ENCODE measurements at regions of chr12 and their contacts with region 1.

Region 1: GRCh38 chr12:52980693-52981423 is 25.4 kb upstream of the EIF4B start:
- DNase-seq: peak; percentile 78 to 83 (median 82)
- H3K4me3 ChIP-seq: no peak overlapping the region
- H3K4me3 Mint-ChIP-seq: no peak overlapping the region
- H3K27ac ChIP-seq: no peak overlapping the region
- H3K27ac Mint-ChIP-seq: peak overlapping the region in 1 of 7 donors; percentile 65
- H3K4me1 ChIP-seq: no peaks in the 10 kb centered on the region
- H3K4me1 Mint-ChIP-seq: peaks cover 0 to 5% (median 1%) of the 10 kb centered on the region in 4 donors
- H3K27me3 ChIP-seq: peaks cover 9% of the 10 kb centered on the region
- H3K27me3 Mint-ChIP-seq: peaks cover 27 to 30% of the 10 kb centered on the region in 2 donors

Region 2: DNA sequence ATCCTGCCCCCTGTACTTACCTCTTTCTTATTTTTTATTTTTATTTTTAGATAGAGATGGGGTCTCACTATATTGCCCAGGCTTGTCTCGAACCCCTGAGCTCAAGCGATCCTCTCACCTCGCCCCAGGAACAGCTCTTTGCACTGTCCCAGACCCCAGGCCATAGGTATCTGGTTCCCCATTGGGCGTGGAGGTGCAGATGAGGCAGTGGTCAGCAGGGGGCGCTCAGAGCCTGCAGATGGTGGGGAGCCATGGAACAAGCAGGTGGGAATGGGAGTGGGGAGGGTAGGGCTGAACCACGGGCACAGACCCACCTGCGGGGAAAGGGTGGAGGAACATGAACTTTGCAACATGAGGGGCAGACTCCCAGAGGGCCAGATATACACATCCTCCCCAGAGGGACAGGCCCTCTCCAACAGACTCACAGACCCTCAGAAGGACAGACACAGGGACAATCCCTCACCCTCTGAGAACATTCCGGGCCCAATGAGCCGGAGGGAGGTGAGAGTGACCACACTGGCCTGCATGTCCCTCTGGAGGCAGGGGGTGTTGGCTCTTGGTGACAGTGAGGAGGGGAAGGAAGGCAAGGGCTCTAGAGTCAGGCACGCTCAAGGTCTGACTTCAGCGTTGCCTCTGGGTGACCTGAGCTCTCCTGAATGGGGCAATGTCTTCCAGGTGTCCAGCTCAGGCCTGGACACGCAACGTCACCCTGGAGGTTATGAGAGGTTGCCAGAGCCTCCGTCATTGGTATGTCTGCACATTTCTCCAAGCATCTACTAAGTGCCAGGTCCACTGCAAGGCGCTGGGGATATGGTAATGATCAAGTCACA is 823.9 kb before region 1 on chr12:
- CTCF ChIA-PET with region 1: interaction called, 5 read pairs
- POLR2A ChIA-PET with region 1: no interaction called
- intact Hi-C with region 1: loop called (anchors 1 kb)
- DNase-seq: peak; percentile 67 to 73 (median 68)
- H3K4me3 ChIP-seq: no peak overlapping the region
- H3K4me3 Mint-ChIP-seq: peak overlapping the region in 1 of 8 donors; percentile 21
- H3K27ac ChIP-seq: no peak overlapping the region
- H3K27ac Mint-ChIP-seq: peak overlapping the region in 6 of 7 donors; percentile 48 to 98 (median 97)
- H3K4me1 ChIP-seq: peaks cover 60% of the 10 kb centered on the region
- H3K4me1 Mint-ChIP-seq: peaks cover 30 to 70% (median 41%) of the 10 kb centered on the region in 4 donors
- H3K27me3 ChIP-seq: no peaks in the 10 kb centered on the region
- H3K27me3 Mint-ChIP-seq: no peaks in the 10 kb centered on the region

Region 3: GRCh38 chr12:52870351-52871290 is 110.2 kb before region 1 on chr12:
- CTCF ChIA-PET with region 1: interaction called, 23 read pairs
- POLR2A ChIA-PET with region 1: interaction called, 3 read pairs
- intact Hi-C with region 1: no loop called
- DNase-seq: peak; percentile 66 to 76 (median 72)
- H3K4me3 ChIP-seq: no peak overlapping the region
- H3K4me3 Mint-ChIP-seq: peak overlapping the region in 3 of 8 donors; percentile 16 to 49 (median 22)
- H3K27ac ChIP-seq: no peak overlapping the region
- H3K27ac Mint-ChIP-seq: peak overlapping the region in 4 of 7 donors; percentile 27 to 85 (median 62)
- H3K4me1 ChIP-seq: peaks cover 21% of the 10 kb centered on the region
- H3K4me1 Mint-ChIP-seq: peaks cover 15 to 29% (median 24%) of the 10 kb centered on the region in 4 donors
- H3K27me3 ChIP-seq: no peaks in the 10 kb centered on the region
- H3K27me3 Mint-ChIP-seq: no peaks in the 10 kb centered on the region

Region 4: DNA sequence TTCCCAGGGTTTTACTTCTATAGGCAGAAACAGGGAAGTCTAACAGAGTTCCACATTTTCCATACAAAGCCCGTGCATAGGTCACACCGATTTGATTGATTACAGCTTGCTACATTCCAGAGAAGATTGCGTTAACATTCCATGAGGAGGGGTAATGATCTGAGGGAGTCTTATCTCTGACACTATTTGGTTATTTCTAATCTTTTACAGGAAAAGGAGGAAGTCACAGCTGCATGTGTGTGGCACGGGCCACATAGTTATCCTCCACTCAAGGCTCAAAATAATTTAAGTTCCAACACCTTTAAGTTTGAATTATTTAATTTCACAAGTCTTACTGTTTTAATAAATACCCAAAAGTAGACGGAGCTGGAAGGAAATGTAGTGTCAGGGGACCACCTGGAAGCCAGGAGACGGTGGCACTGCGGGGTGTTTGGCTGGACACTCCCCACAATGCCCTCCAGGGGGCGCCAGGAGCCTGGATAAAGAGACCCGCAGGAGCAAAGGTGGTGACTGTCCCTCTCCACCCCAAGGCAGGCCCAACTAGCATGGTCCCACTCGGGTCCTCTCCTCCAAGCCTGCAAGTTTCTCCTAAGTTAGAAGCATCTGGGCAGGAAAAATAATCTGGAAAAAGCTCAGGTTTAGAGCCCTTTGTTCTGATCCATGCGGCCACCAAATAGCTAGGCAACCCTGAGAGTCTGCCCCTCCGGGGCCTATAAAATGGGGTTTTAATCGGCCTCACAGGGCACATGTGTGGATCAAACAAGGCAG is 96.1 kb before region 1 on chr12:
- CTCF ChIA-PET with region 1: interaction called, 459 read pairs
- POLR2A ChIA-PET with region 1: interaction called, 3 read pairs
- intact Hi-C with region 1: loop called (anchors 1 kb)
- DNase-seq: peak; percentile 66 to 71 (median 67)
- H3K4me3 ChIP-seq: no peak overlapping the region
- H3K4me3 Mint-ChIP-seq: no peak overlapping the region
- H3K27ac ChIP-seq: no peak overlapping the region
- H3K27ac Mint-ChIP-seq: no peak overlapping the region
- H3K4me1 ChIP-seq: peaks cover 5% of the 10 kb centered on the region
- H3K4me1 Mint-ChIP-seq: peaks cover 3 to 7% (median 5%) of the 10 kb centered on the region in 4 donors
- H3K27me3 ChIP-seq: no peaks in the 10 kb centered on the region
- H3K27me3 Mint-ChIP-seq: peaks cover 5 to 9% of the 10 kb centered on the region in 2 donors

Region 5: GRCh38 chr12:52918351-52918750 is 62.5 kb before region 1 on chr12:
- CTCF ChIA-PET with region 1: interaction called, 10 read pairs
- POLR2A ChIA-PET with region 1: no interaction called
- intact Hi-C with region 1: no loop called
- DNase-seq: no peak
- H3K4me3 ChIP-seq: no peak overlapping the region
- H3K4me3 Mint-ChIP-seq: no peak overlapping the region
- H3K27ac ChIP-seq: no peak overlapping the region
- H3K27ac Mint-ChIP-seq: no peak overlapping the region
- H3K4me1 ChIP-seq: no peaks in the 10 kb centered on the region
- H3K4me1 Mint-ChIP-seq: no peaks in the 10 kb centered on the region
- H3K27me3 ChIP-seq: no peaks in the 10 kb centered on the region
- H3K27me3 Mint-ChIP-seq: peaks cover 6 to 11% of the 10 kb centered on the region in 2 donors

Region 6: GRCh38 chr12:52949413-52950331 is 31.2 kb before region 1 on chr12:
- CTCF ChIA-PET with region 1: interaction called, 12 read pairs
- POLR2A ChIA-PET with region 1: no interaction called
- intact Hi-C with region 1: no loop called
- DNase-seq: no peak
- H3K4me3 ChIP-seq: peak overlapping the region in 1 of 2 donors; percentile 66
- H3K4me3 Mint-ChIP-seq: peak overlapping the region; percentile 52 to 83 (median 69)
- H3K27ac ChIP-seq: no peak overlapping the region
- H3K27ac Mint-ChIP-seq: peak overlapping the region in 5 of 7 donors; percentile 38 to 76 (median 69)
- H3K4me1 ChIP-seq: peaks cover 8% of the 10 kb centered on the region
- H3K4me1 Mint-ChIP-seq: peaks cover 2 to 22% (median 12%) of the 10 kb centered on the region in 4 donors
- H3K27me3 ChIP-seq: no peaks in the 10 kb centered on the region
- H3K27me3 Mint-ChIP-seq: peaks cover 0 to 6% of the 10 kb centered on the region in 2 donors

Region 7: GRCh38 chr12:52992699-52993557 is 12.1 kb after region 1 on chr12:
- CTCF ChIA-PET with region 1: interaction called, 15 read pairs
- POLR2A ChIA-PET with region 1: no interaction called
- intact Hi-C with region 1: no loop called
- DNase-seq: no peak
- H3K4me3 ChIP-seq: no peak overlapping the region
- H3K4me3 Mint-ChIP-seq: no peak overlapping the region
- H3K27ac ChIP-seq: no peak overlapping the region
- H3K27ac Mint-ChIP-seq: peak overlapping the region in 1 of 7 donors; percentile 2
- H3K4me1 ChIP-seq: no peaks in the 10 kb centered on the region
- H3K4me1 Mint-ChIP-seq: no peaks in the 10 kb centered on the region
- H3K27me3 ChIP-seq: no peaks in the 10 kb centered on the region
- H3K27me3 Mint-ChIP-seq: peaks cover 0 to under 1% of the 10 kb centered on the region in 2 donors

Measured in CD4-positive, alpha-beta memory T cell (primary cell).